Thyroid gland (tissue), 4 donors: ENCODE measurements at regions of chr7 and their contacts with region 1.

Region 1: DNA sequence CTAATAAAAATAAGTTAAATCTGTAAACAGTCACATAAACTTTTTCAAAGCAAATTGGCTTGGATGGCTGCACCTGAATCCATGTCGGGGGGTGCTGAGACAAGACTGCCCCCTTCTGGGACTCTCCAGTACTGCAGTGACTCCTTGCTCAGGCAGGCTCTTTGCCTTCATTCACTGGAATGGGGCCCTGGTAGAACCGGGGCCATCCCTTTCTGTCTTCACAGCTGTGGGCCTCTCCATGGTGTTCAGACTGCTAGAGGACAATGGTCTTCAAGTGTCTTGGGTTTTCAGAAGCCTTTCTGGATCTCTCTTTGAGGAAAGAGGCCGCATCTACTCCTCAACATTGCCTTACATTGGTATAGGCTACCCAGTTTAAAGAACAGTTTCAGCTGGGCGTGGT is 16.1 kb upstream of the IMPDH1 start:
- DNase-seq: peak; percentile 48 to 66
- H3K4me3 ChIP-seq: no peak overlapping the region
- H3K27ac ChIP-seq: no peak overlapping the region
- H3K4me1 ChIP-seq: peaks cover 0 to 4% of the 10 kb centered on the region in 2 donors
- H3K27me3 ChIP-seq: no peaks in the 10 kb centered on the region
- CTCF ChIP-seq: peak; percentile 49 to 77 (median 61)
- POLR2A ChIP-seq: no peak

Region 2: GRCh38 chr7:127792528-127793342 is 633.1 kb before region 1 on chr7:
- intact Hi-C with region 1: no loop called
- DNase-seq: peak in 1 of 2 donors; percentile 11
- H3K4me3 ChIP-seq: no peak overlapping the region
- H3K27ac ChIP-seq: no peak overlapping the region
- H3K4me1 ChIP-seq: peaks cover 0 to 13% of the 10 kb centered on the region in 2 donors
- H3K27me3 ChIP-seq: no peaks in the 10 kb centered on the region
- CTCF ChIP-seq: peak in 2 of 6 experiments; percentile 24 to 30
- POLR2A ChIP-seq: no peak

Region 3: DNA sequence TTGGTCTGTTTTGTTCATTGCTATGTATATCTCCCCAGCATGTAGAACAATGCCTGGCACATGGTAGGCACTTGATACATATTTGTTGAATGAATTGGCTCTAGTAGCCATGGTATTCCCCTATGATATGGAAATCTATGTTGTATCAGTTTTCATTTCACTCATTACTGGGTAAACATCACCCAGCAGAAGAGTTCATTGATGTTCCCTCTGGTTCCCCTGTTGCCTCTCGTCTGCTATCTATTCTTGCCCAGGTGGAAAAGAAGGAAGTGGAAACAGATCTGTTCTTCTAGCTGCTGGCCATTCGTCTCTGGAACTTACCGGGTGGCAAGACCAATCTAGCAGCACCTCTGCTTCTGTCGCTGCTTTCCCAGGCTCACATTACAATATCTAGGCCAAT is 466.1 kb before region 1 on chr7:
- intact Hi-C with region 1: no loop called
- DNase-seq: no peak
- H3K4me3 ChIP-seq: no peak overlapping the region
- H3K27ac ChIP-seq: no peak overlapping the region
- H3K4me1 ChIP-seq: peaks cover 0 to 3% of the 10 kb centered on the region in 2 donors
- H3K27me3 ChIP-seq: no peaks in the 10 kb centered on the region
- CTCF ChIP-seq: no peak
- POLR2A ChIP-seq: no peak

Region 4: GRCh38 chr7:128373606-128374005 is 52.2 kb before region 1 on chr7:
- intact Hi-C with region 1: no loop called
- DNase-seq: no peak
- H3K4me3 ChIP-seq: no peak overlapping the region
- H3K27ac ChIP-seq: no peak overlapping the region
- H3K4me1 ChIP-seq: no peaks in the 10 kb centered on the region
- H3K27me3 ChIP-seq: no peaks in the 10 kb centered on the region
- CTCF ChIP-seq: no peak
- POLR2A ChIP-seq: no peak

Region 5: GRCh38 chr7:128395748-128396147 is 30.1 kb before region 1 on chr7:
- intact Hi-C with region 1: loop called (anchors 2 kb)
- DNase-seq: no peak
- H3K4me3 ChIP-seq: no peak overlapping the region
- H3K27ac ChIP-seq: no peak overlapping the region
- H3K4me1 ChIP-seq: no peaks in the 10 kb centered on the region
- H3K27me3 ChIP-seq: no peaks in the 10 kb centered on the region
- CTCF ChIP-seq: no peak
- POLR2A ChIP-seq: no peak

Region 6: GRCh38 chr7:128459394-128459878 is 33.6 kb after region 1 on chr7:
- intact Hi-C with region 1: loop called (anchors 2 kb)
- DNase-seq: peak; percentile 65 to 67
- H3K4me3 ChIP-seq: no peak overlapping the region
- H3K27ac ChIP-seq: no peak overlapping the region
- H3K4me1 ChIP-seq: peaks cover 21 to 26% of the 10 kb centered on the region in 2 donors
- H3K27me3 ChIP-seq: no peaks in the 10 kb centered on the region
- CTCF ChIP-seq: peak; percentile 49 to 83 (median 75)
- POLR2A ChIP-seq: no peak